PC-9 (cell line): ENCODE measurements at regions of chr4 and their contacts with region 1.

Region 1: GRCh38 chr4:124304941-124305340 is 407.6 kb downstream of the ANKRD50 start:
- DNase-seq: no peak
- H3K4me3 ChIP-seq: no peak overlapping the region
- H3K27ac ChIP-seq: no peak overlapping the region
- H3K4me1 ChIP-seq: no peaks in the 10 kb centered on the region
- H3K27me3 ChIP-seq: no peaks in the 10 kb centered on the region
- CTCF ChIP-seq: no peak

Region 2: DNA sequence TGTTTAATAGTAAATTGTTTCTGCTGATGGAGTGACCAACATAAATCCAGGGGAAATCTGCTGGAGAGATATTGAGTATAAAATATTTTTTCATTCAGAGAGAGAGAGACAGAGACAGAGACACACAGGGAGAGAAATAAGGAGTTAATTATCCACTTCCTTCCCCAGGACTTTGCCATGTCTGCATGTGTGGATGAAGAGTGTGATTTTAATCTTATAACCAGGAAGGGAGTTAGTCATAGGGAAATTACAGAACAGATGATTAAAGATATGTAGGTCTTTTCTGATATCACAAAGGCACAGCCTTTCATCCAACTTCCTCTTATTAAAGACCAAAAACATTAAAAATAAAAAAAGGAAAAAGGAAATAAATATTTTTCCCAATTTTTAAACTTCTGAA is 382.1 kb before region 1 on chr4:
- CTCF ChIA-PET with region 1: no interaction called
- POLR2A ChIA-PET with region 1: interaction called, 12 read pairs
- intact Hi-C with region 1: no loop called
- DNase-seq: no peak
- H3K4me3 ChIP-seq: no peak overlapping the region
- H3K27ac ChIP-seq: no peak overlapping the region
- H3K4me1 ChIP-seq: no peaks in the 10 kb centered on the region
- H3K27me3 ChIP-seq: no peaks in the 10 kb centered on the region
- CTCF ChIP-seq: no peak

Region 3: DNA sequence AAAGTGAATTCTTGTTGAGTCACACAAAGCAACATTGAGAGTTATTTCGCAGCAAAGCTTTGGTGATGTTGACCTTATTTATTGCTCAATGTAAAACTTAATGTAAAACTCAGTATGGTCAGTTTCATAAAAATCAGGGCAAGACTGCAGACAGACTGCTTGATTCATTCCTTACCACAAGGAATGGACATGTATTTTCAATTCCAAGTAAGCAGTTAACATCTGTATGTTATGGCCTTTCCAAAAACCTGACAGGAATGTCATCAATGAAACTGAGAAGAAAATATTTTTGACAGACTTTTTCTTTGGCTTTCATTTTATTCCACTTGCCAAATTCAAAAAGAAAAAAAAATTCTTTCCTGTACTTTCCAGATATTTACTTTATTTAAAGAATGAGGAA is 80.7 kb before region 1 on chr4:
- CTCF ChIA-PET with region 1: no interaction called
- POLR2A ChIA-PET with region 1: no interaction called
- intact Hi-C with region 1: no loop called
- DNase-seq: no peak
- H3K4me3 ChIP-seq: no peak overlapping the region
- H3K27ac ChIP-seq: no peak overlapping the region
- H3K4me1 ChIP-seq: no peaks in the 10 kb centered on the region
- H3K27me3 ChIP-seq: no peaks in the 10 kb centered on the region
- CTCF ChIP-seq: no peak